Heart right ventricle (tissue), 16 donors: ENCODE measurements at regions of chr5 and their contacts with region 1.

Region 1: GRCh38 chr5:140401362-140402257 is at the start of gene ANKHD1:
- DNase-seq: peak; percentile 98 to 100
- ATAC-seq: peak; percentile 93 to 97 (median 96)
- H3K4me3 ChIP-seq: peak within 1 kb of the TSS; percentile 76 to 99 (median 93)
- H3K27ac ChIP-seq: peak within 1 kb of the TSS; percentile 79 to 97 (median 94)
- H3K4me1 ChIP-seq: peaks cover 4 to 44% (median 38%) of the 10 kb centered on the region in 9 donors
- H3K27me3 ChIP-seq: no peaks in the 10 kb centered on the region
- CTCF ChIP-seq: no peak
- total RNA-seq, gene ANKHD1: 51.9 to 77.9 (median 68.5) TPM

Region 2: GRCh38 chr5:139368613-139369012 is 1033.0 kb before region 1 on chr5:
- intact Hi-C with region 1: no loop called
- DNase-seq: no peak
- ATAC-seq: peak in 2 of 8 donors; percentile 17 to 21
- H3K4me3 ChIP-seq: no peak overlapping the region
- H3K27ac ChIP-seq: peak overlapping the region in 1 of 10 donors; percentile 53
- H3K4me1 ChIP-seq: peaks cover 0 to 30% (median 14%) of the 10 kb centered on the region in 9 donors
- H3K27me3 ChIP-seq: no peaks in the 10 kb centered on the region
- CTCF ChIP-seq: peak in 2 of 9 donors; percentile 10 to 24

Region 3: GRCh38 chr5:140632150-140633020 is 230.8 kb after region 1 on chr5:
- intact Hi-C with region 1: loop called in 1 of 10 experiments (anchors 10 kb)
- DNase-seq: peak; percentile 50 to 56
- ATAC-seq: peak; percentile 62 to 85 (median 77)
- H3K4me3 ChIP-seq: peak overlapping the region; percentile 10 to 69 (median 62)
- H3K27ac ChIP-seq: peak overlapping the region in 9 of 10 donors; percentile 14 to 92 (median 74)
- H3K4me1 ChIP-seq: peaks cover 0 to 39% (median 19%) of the 10 kb centered on the region in 9 donors
- H3K27me3 ChIP-seq: no peaks in the 10 kb centered on the region
- CTCF ChIP-seq: no peak

Region 4: DNA sequence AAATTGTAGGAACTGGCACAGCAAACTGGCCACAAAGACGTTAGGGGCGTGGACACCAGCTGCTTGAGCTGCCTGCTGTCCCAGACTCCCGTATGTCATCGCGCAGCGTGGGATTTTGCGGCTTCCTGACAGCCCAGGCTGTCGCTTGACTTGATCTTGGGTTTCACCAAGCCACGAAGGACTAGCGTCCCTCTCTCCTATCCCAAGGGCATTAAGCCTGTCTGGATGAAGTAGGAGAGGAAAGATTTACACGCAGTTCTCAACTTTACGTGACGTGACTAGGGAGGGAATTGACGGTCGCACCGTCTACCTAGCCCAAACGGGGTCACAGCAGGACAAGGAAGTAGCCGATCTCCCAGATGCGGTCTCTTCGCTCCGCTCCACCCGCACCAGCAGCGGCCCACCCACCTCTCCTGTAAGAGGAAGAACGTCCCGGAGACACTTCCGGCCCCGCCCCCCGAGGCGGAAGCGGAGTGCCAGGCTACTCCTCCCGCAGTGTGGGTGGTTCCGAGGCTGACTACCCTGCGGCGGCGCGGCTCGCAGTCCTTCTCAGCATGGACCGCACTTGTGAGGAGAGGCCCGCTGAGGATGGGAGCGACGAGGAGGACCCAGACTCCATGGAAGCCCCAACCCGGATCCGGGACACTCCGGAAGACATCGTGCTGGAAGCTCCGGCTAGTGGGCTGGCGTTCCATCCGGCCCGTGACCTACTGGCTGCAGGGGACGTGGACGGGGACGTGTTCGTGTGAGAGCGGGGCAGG is 262.9 kb after region 1 on chr5 and contains the start of gene WDR55:
- intact Hi-C with region 1: loop called in 2 of 10 experiments (anchors 10 kb)
- DNase-seq: peak; percentile 97
- ATAC-seq: peak; percentile 97 to 99 (median 99)
- H3K4me3 ChIP-seq: peak within 1 kb of the TSS; percentile 64 to 94 (median 80)
- H3K27ac ChIP-seq: peak within 1 kb of the TSS; percentile 85 to 94 (median 92)
- H3K4me1 ChIP-seq: peaks cover 6 to 39% (median 26%) of the 10 kb centered on the region in 9 donors
- H3K27me3 ChIP-seq: no peaks in the 10 kb centered on the region
- CTCF ChIP-seq: no peak
- total RNA-seq, gene WDR55: 10.5 to 14.5 (median 12.2) TPM

Region 5: GRCh38 chr5:140700177-140701144 is 298.9 kb after region 1 on chr5 and contains the start of gene ZMAT2:
- intact Hi-C with region 1: loop called in 2 of 10 experiments (anchors 10 kb)
- DNase-seq: peak; percentile 90 to 96
- ATAC-seq: peak; percentile 96 to 99 (median 99)
- H3K4me3 ChIP-seq: peak within 1 kb of the TSS; percentile 67 to 95 (median 77)
- H3K27ac ChIP-seq: peak within 1 kb of the TSS in 9 of 10 donors; percentile 51 to 84 (median 67)
- H3K4me1 ChIP-seq: peaks cover 3 to 22% (median 17%) of the 10 kb centered on the region in 9 donors
- H3K27me3 ChIP-seq: no peaks in the 10 kb centered on the region
- CTCF ChIP-seq: no peak
- total RNA-seq, gene ZMAT2: 27.9 to 41.4 (median 33.6) TPM